Activated naive CD4-positive, alpha-beta T cell treated with anti-CD3 and anti-CD28 coated beads for 36 hours (primary cell): ENCODE measurements at regions of chr1 and their contacts with region 1.

Region 1: GRCh38 chr1:1059494-1060280 is 14.4 kb downstream of the RNF223 start:
- DNase-seq: peak; percentile 94
- H3K4me3 Mint-ChIP-seq: peak overlapping the region; percentile 71
- H3K27ac Mint-ChIP-seq: no peak overlapping the region
- H3K4me1 Mint-ChIP-seq: peaks cover 37% of the 10 kb centered on the region
- H3K27me3 Mint-ChIP-seq: peaks cover 26% of the 10 kb centered on the region

Region 2: GRCh38 chr1:999725-1000356 is 59.8 kb before region 1 on chr1 and contains the start of gene HES4:
- CTCF ChIA-PET with region 1: no interaction called
- intact Hi-C with region 1: no loop called
- DNase-seq: peak; percentile 68
- H3K4me3 Mint-ChIP-seq: peak within 1 kb of the TSS; percentile 71
- H3K27ac Mint-ChIP-seq: peak within 1 kb of the TSS; percentile 80
- H3K4me1 Mint-ChIP-seq: peaks cover 12% of the 10 kb centered on the region
- H3K27me3 Mint-ChIP-seq: peaks cover 35% of the 10 kb centered on the region
- total RNA-seq, gene HES4: 4.1 to 4.7 TPM

Region 3: GRCh38 chr1:1013105-1013921 is 46.4 kb before region 1 on chr1 and contains the start of gene ISG15:
- CTCF ChIA-PET with region 1: interaction called, 10 read pairs
- intact Hi-C with region 1: loop called (anchors 2 kb)
- DNase-seq: peak; percentile 92
- H3K4me3 Mint-ChIP-seq: peak within 1 kb of the TSS; percentile 94
- H3K27ac Mint-ChIP-seq: peak within 1 kb of the TSS; percentile 86
- H3K4me1 Mint-ChIP-seq: peaks cover 29% of the 10 kb centered on the region
- H3K27me3 Mint-ChIP-seq: peaks cover 4% of the 10 kb centered on the region
- total RNA-seq, gene ISG15: 143 to 147 TPM

Region 4: DNA sequence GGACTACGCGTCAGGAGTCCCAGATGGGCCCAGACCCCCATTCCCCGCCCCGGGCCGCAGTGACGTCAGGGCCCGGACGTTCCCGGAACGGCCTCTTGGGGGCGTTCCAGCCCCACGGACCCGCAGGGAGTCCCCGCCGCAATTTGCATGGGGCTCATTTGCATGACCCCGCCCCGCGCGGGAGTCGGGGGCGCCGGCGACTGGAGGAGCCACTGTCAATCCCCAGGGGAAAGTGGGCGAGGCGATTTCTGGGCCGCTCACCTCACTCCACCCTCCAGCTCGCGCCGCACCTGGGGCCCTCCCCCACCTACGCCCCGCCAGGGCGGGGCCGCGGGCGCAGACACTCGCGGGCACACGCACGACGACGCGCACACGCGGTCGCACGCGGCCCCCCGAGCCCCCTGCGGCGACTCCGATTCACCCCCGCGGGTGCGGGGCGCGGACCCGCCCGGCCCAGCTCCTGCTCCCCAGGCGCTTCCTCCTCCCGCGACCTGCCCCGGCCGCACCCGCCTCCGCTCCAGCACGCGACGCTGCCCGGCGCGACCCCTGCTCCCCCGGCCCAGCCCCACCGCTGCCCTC is 26.6 kb before region 1 on chr1:
- CTCF ChIA-PET with region 1: interaction called, 19 read pairs
- intact Hi-C with region 1: loop called (anchors 1 kb)
- DNase-seq: peak; percentile 97
- H3K4me3 Mint-ChIP-seq: peak overlapping the region; percentile 45
- H3K27ac Mint-ChIP-seq: no peak overlapping the region
- H3K4me1 Mint-ChIP-seq: peaks cover 9% of the 10 kb centered on the region
- H3K27me3 Mint-ChIP-seq: peaks cover 9% of the 10 kb centered on the region

Region 5: DNA sequence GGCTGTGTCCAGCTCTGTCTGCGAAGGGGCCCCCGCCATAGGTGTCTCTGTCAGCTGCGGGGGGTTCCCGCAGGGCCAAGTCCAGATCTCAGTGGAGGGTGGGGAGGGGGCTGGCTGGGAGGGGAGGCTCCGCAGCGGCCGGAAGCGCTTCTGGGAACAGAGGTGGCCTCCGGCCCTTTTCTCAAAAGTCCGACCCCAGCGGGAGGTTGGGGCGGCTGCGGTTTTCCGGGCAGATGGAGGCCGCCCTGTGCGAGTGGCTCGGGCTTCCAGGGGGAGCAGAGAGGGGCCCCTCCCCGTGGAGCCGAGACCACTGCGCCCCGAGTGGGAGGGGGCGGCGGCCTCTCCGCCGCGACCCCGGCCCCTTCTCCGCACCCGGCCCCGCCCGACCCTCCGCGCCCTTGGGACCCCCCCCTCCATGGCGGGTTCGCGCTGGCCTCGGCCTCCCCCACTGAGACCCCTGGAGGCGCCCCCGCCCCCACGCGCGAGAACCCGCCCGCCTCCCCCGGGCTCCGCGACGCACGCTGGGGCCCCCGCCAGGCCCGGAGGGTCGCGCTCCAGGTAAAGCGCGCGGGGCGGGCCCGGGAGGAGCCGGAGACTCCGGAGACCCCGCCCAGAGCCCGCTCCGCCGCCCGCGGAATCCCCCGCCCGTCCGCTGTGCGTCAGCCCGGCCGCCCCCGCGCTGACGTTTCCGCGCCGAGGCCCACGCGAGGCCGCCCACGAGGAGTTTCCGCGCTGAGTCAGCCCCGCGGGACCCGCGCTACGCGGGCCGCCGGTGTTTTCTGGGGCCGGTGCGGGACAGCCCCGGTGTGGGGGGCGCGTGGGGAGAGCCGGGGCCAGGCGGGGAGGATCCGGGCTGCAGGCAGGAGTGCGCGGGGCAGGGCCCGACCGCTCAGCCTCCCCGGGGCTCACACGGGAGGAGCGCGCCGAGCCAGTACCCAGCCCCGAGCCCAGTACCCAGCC is 141.4 kb after region 1 on chr1:
- CTCF ChIA-PET with region 1: interaction called, 3 read pairs
- intact Hi-C with region 1: loop called (anchors 1 kb)
- DNase-seq: peak; percentile 91
- H3K4me3 Mint-ChIP-seq: peak overlapping the region; percentile 59
- H3K27ac Mint-ChIP-seq: peak overlapping the region; percentile 83
- H3K4me1 Mint-ChIP-seq: peaks cover 12% of the 10 kb centered on the region
- H3K27me3 Mint-ChIP-seq: no peaks in the 10 kb centered on the region